ENCODE measurements at regions of chr17 and their contacts with region 1.

Region 1: GRCh38 chr17:47229535-47230443 is 20.6 kb downstream of the MYL4 start:
- DNase-seq: peak; percentile 45 to 86 (median 54)
- ATAC-seq: peak; percentile 99
- H3K4me3 ChIP-seq: peak overlapping the region; percentile 15
- H3K4me3 Mint-ChIP-seq: peak overlapping the region; percentile 50
- H3K27ac ChIP-seq: no peak overlapping the region
- H3K27ac Mint-ChIP-seq: no peak overlapping the region
- H3K4me1 ChIP-seq: peaks cover 10% of the 10 kb centered on the region
- H3K4me1 Mint-ChIP-seq: peaks cover 12% of the 10 kb centered on the region
- H3K27me3 ChIP-seq: no peaks in the 10 kb centered on the region
- H3K27me3 Mint-ChIP-seq: peaks cover 12% of the 10 kb centered on the region
- CTCF ChIP-seq: peak; percentile 96

Region 2: GRCh38 chr17:47172698-47173565 is 56.9 kb before region 1 on chr17:
- CTCF ChIA-PET with region 1: no interaction called
- POLR2A ChIA-PET with region 1: no interaction called
- intact Hi-C with region 1: no loop called
- DNase-seq: no peak
- ATAC-seq: no peak
- H3K4me3 ChIP-seq: no peak overlapping the region
- H3K4me3 Mint-ChIP-seq: no peak overlapping the region
- H3K27ac ChIP-seq: no peak overlapping the region
- H3K27ac Mint-ChIP-seq: peak overlapping the region; percentile 40
- H3K4me1 ChIP-seq: peaks cover 14% of the 10 kb centered on the region
- H3K4me1 Mint-ChIP-seq: peaks cover 37% of the 10 kb centered on the region
- H3K27me3 ChIP-seq: no peaks in the 10 kb centered on the region
- H3K27me3 Mint-ChIP-seq: no peaks in the 10 kb centered on the region
- CTCF ChIP-seq: no peak

Region 3: GRCh38 chr17:47315451-47316266 is 85.9 kb after region 1 on chr17:
- CTCF ChIA-PET with region 1: interaction called, 6 read pairs
- POLR2A ChIA-PET with region 1: no interaction called
- intact Hi-C with region 1: loop called (anchors 1 to 2 kb)
- DNase-seq: peak in 7 of 14 experiments; percentile 10 to 74 (median 43)
- ATAC-seq: peak; percentile 75
- H3K4me3 ChIP-seq: no peak overlapping the region
- H3K4me3 Mint-ChIP-seq: no peak overlapping the region
- H3K27ac ChIP-seq: no peak overlapping the region
- H3K27ac Mint-ChIP-seq: no peak overlapping the region
- H3K4me1 ChIP-seq: no peaks in the 10 kb centered on the region
- H3K4me1 Mint-ChIP-seq: no peaks in the 10 kb centered on the region
- H3K27me3 ChIP-seq: no peaks in the 10 kb centered on the region
- H3K27me3 Mint-ChIP-seq: no peaks in the 10 kb centered on the region
- CTCF ChIP-seq: peak; percentile 65

Region 4: GRCh38 chr17:47615766-47616424 is 386.1 kb after region 1 on chr17:
- CTCF ChIA-PET with region 1: interaction called, 3 read pairs
- POLR2A ChIA-PET with region 1: no interaction called
- intact Hi-C with region 1: loop called (anchors 1 to 2 kb)
- DNase-seq: peak in 4 of 14 experiments; percentile 2 to 75 (median 64)
- ATAC-seq: peak; percentile 61
- H3K4me3 ChIP-seq: no peak overlapping the region
- H3K4me3 Mint-ChIP-seq: no peak overlapping the region
- H3K27ac ChIP-seq: no peak overlapping the region
- H3K27ac Mint-ChIP-seq: peak overlapping the region; percentile 1
- H3K4me1 ChIP-seq: no peaks in the 10 kb centered on the region
- H3K4me1 Mint-ChIP-seq: no peaks in the 10 kb centered on the region
- H3K27me3 ChIP-seq: no peaks in the 10 kb centered on the region
- H3K27me3 Mint-ChIP-seq: no peaks in the 10 kb centered on the region
- CTCF ChIP-seq: peak; percentile 83